Right lobe of liver (tissue), 6 donors: ENCODE measurements at regions of chr5 and their contacts with region 1.

Region 1: DNA sequence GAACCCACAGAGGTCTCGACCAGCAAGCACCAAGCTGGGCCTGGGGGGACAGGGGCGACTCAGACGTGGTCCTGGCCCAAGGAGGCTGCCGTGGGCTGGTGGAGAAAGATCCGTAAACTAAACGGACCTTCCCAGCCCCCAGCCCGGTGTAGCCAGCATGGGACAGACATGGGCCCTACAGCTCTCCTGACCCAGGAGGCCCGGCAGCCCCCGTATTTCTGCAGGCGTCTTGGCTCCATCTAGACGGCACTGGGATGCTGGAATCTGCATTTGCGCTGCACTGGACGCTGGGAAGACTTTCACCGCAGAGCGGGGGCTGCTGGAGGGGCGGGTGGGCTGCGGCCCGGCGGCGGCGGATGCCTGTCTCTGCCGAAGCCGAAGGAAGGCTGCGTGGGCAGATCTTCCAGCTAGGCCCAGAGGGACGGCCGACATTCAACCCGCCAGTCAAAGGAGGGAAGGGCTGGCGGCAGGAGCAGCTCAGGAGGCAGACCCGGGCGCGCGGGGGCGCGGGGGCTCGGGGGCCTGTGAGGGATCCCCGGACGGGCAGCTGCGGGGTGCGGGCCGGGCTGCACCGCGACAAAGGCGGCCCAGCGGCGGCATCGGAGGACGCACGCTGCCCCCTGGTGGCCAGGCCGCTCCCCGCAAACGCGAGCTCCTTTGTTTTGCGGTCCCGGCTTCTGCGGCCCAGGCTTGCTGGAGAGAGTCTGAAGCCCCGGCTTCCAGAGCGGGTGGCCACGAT is 266.2 kb downstream of the NSG2 start:
- DNase-seq: peak; percentile 69 to 78 (median 78)
- ATAC-seq: peak; percentile 86 to 96 (median 92)
- H3K4me3 ChIP-seq: peak overlapping the region; percentile 18 to 50 (median 34)
- H3K27ac ChIP-seq: no peak overlapping the region
- H3K4me1 ChIP-seq: no peaks in the 10 kb centered on the region
- H3K27me3 ChIP-seq: no peaks in the 10 kb centered on the region
- CTCF ChIP-seq: peak; percentile 85 to 97 (median 90)
- POLR2A ChIP-seq: no peak

Region 2: DNA sequence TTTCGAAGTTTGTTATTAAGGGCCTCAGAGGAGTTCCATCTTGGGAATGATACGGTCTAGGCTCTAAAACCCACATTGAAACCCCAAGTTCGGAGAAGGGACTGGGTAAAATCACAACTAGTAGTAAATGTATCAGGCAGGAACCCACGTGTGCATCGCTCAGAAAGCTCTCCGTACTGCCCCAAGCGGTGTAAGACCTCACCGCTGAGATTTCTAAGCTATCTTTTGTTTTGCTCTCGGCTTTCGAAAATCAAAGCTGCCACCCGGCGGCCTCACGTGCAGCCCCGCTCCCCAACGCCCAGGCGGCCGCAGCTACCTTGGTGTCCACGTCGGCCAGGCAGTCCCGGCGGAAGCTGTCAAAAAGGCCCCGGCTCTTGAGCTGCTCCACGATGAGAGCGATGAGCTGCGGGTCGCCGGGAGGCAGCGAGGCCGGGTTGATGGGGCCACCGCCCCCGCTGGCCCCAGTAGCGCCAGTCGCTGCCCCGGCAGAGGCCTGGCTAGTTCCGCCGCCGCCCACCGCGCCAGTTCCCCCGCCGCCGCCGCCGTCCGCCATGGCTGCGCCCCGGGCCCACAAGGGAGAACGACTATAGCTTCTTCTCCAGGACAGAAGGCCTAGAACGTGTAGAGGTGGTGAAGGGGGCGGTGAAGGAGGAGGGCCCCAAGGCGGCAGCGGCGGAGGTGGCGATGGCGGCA is 695.7 kb before region 1 on chr5:
- intact Hi-C with region 1: loop called in 1 of 2 experiments (anchors 10 kb)
- DNase-seq: peak in 2 of 3 donors; percentile 61 to 62
- ATAC-seq: peak; percentile 49 to 70 (median 60)
- H3K4me3 ChIP-seq: peak overlapping the region; percentile 87 to 96 (median 94)
- H3K27ac ChIP-seq: peak overlapping the region; percentile 85 to 89 (median 86)
- H3K4me1 ChIP-seq: peaks cover 0 to 24% (median 12%) of the 10 kb centered on the region in 4 donors
- H3K27me3 ChIP-seq: no peaks in the 10 kb centered on the region
- CTCF ChIP-seq: peak; percentile 51 to 65 (median 58)
- POLR2A ChIP-seq: peak; percentile 26

Region 3: GRCh38 chr5:174045470-174046025 is 266.2 kb before region 1 on chr5 and contains the start of gene NSG2:
- intact Hi-C with region 1: loop called (anchors 5 to 10 kb)
- DNase-seq: peak; percentile 87 to 90 (median 89)
- ATAC-seq: peak; percentile 97 to 100 (median 100)
- H3K4me3 ChIP-seq: no peak within 1 kb of the TSS
- H3K27ac ChIP-seq: no peak within 1 kb of the TSS
- H3K4me1 ChIP-seq: peaks cover 0 to 8% (median 2%) of the 10 kb centered on the region in 4 donors
- H3K27me3 ChIP-seq: no peaks in the 10 kb centered on the region
- CTCF ChIP-seq: peak; percentile 61 to 80 (median 76)
- POLR2A ChIP-seq: no peak
- total RNA-seq, gene NSG2: 0.13 TPM in 1 of 6 experiments, not detected in the others

Region 4: GRCh38 chr5:174056064-174056847 is 255.4 kb before region 1 on chr5:
- intact Hi-C with region 1: loop called in 1 of 2 experiments (anchors 10 kb)
- DNase-seq: no peak
- ATAC-seq: no peak
- H3K4me3 ChIP-seq: no peak overlapping the region
- H3K27ac ChIP-seq: no peak overlapping the region
- H3K4me1 ChIP-seq: no peaks in the 10 kb centered on the region
- H3K27me3 ChIP-seq: no peaks in the 10 kb centered on the region
- CTCF ChIP-seq: no peak
- POLR2A ChIP-seq: no peak

Region 5: GRCh38 chr5:174272671-174273070 is 39.0 kb before region 1 on chr5:
- intact Hi-C with region 1: no loop called
- DNase-seq: no peak
- ATAC-seq: no peak
- H3K4me3 ChIP-seq: no peak overlapping the region
- H3K27ac ChIP-seq: no peak overlapping the region
- H3K4me1 ChIP-seq: no peaks in the 10 kb centered on the region
- H3K27me3 ChIP-seq: no peaks in the 10 kb centered on the region
- CTCF ChIP-seq: no peak
- POLR2A ChIP-seq: no peak